ENCODE measurements at regions of chr1 and their contacts with region 1.

Region 1: DNA sequence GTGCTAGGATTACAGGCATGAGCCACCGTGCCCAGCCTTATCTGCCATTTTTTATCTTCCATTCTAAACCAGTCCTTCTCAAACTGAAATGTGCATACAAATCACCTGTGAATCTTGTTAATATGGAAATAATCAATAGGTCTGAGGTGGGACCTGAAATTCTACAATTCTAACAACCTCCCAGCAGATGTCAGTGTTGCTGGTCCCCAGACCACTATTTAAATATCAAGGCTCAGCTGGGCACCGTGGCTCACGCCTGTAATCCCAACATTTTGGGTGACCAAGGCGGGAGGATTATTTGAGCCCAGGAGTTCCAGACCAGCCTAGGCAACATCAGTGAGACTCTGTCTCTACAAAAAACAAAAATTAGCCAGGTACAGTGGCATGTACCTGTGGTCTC is 4.1 kb downstream of the UQCRHL start:
- DNase-seq: no peak
- ATAC-seq: peak; percentile 76
- H3K4me3 ChIP-seq: no peak overlapping the region
- H3K27ac ChIP-seq: no peak overlapping the region
- H3K4me1 ChIP-seq: no peaks in the 10 kb centered on the region
- H3K27me3 ChIP-seq: no peaks in the 10 kb centered on the region
- CTCF ChIP-seq: peak; percentile 39 to 53 (median 47)
- EP300 ChIP-seq: no peak
- POLR2A ChIP-seq: no peak
- RAD21 ChIP-seq: peak; percentile 63

Region 2: GRCh38 chr1:15749399-15750291 is 53.7 kb before region 1 on chr1:
- CTCF ChIA-PET with region 1: no interaction called
- POLR2A ChIA-PET with region 1: no interaction called
- RAD21 ChIA-PET with region 1: no interaction called
- SMC1A ChIA-PET with region 1: no interaction called
- in situ Hi-C with region 1: loop called (anchors 5 kb)
- intact Hi-C with region 1: no loop called
- DNase-seq: no peak
- ATAC-seq: no peak
- H3K4me3 ChIP-seq: no peak overlapping the region
- H3K27ac ChIP-seq: no peak overlapping the region
- H3K4me1 ChIP-seq: 0 out of 2 replicates have a peak, but pooled peaks cover 3% of the 10 kb centered on the region
- H3K27me3 ChIP-seq: no peaks in the 10 kb centered on the region; a peak in 1 of 4 replicates
- CTCF ChIP-seq: no peak
- EP300 ChIP-seq: no peak
- POLR2A ChIP-seq: no peak
- RAD21 ChIP-seq: no peak

Region 3: GRCh38 chr1:16032388-16033103 is 229.2 kb after region 1 on chr1:
- CTCF ChIA-PET with region 1: interaction called, 3 read pairs
- POLR2A ChIA-PET with region 1: interaction called, 5 read pairs
- RAD21 ChIA-PET with region 1: no interaction called
- SMC1A ChIA-PET with region 1: no interaction called
- in situ Hi-C with region 1: no loop called
- intact Hi-C with region 1: loop called (anchors 2 kb)
- DNase-seq: no peak
- ATAC-seq: peak; percentile 97
- H3K4me3 ChIP-seq: no peak overlapping the region
- H3K27ac ChIP-seq: no peak overlapping the region
- H3K4me1 ChIP-seq: no peaks in the 10 kb centered on the region
- H3K27me3 ChIP-seq: no peaks in the 10 kb centered on the region
- CTCF ChIP-seq: peak; percentile 83 to 98 (median 83)
- EP300 ChIP-seq: no peak
- POLR2A ChIP-seq: no peak
- RAD21 ChIP-seq: peak; percentile 92

Region 4: GRCh38 chr1:16503494-16503893 is 700.1 kb after region 1 on chr1:
- CTCF ChIA-PET with region 1: no interaction called
- POLR2A ChIA-PET with region 1: no interaction called
- RAD21 ChIA-PET with region 1: no interaction called
- SMC1A ChIA-PET with region 1: no interaction called
- in situ Hi-C with region 1: no loop called
- intact Hi-C with region 1: no loop called
- DNase-seq: no peak
- ATAC-seq: no peak
- H3K4me3 ChIP-seq: no peak overlapping the region
- H3K27ac ChIP-seq: no peak overlapping the region
- H3K4me1 ChIP-seq: no peaks in the 10 kb centered on the region; the same call in 1 of the 2 replicates
- H3K27me3 ChIP-seq: no peaks in the 10 kb centered on the region; a peak in 1 of 4 replicates
- CTCF ChIP-seq: no peak
- EP300 ChIP-seq: no peak
- POLR2A ChIP-seq: no peak
- RAD21 ChIP-seq: no peak

Measured in GM12878 (cell line).